ENCODE measurements at regions of chr12 and their contacts with region 1.

Region 1: GRCh38 chr12:109165599-109165998 is 49.2 kb downstream of the ACACB start:
- DNase-seq: no peak
- ATAC-seq: no peak
- H3K4me3 ChIP-seq: no peak overlapping the region
- H3K27ac ChIP-seq: peak overlapping the region in 1 of 12 donors; percentile 80
- H3K4me1 ChIP-seq: peaks cover 4 to 42% (median 26%) of the 10 kb centered on the region in 12 donors
- H3K27me3 ChIP-seq: no peaks in the 10 kb centered on the region
- CTCF ChIP-seq: no peak
- POLR2A ChIP-seq: no peak

Region 2: DNA sequence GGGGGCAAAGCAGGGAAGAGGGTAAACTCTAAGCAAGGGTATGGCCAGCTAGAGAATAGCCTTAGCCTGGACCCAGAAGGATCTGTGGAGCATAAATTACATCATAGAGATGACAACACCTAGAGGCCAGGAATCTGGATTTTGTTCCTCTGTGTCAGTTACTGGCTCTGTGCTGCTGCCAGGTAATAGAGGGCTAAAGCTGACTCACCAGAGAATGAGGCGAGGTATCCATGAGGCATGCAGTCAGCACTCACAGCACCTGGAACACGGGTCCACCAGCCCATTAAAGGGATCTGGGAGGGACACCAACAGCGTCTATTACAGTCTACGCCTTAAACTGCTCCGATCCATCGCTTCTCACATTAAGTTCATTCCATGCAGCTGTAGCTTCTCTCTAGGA is 751.6 kb before region 1 on chr12:
- intact Hi-C with region 1: no loop called
- DNase-seq: no peak
- ATAC-seq: no peak
- H3K4me3 ChIP-seq: no peak overlapping the region
- H3K27ac ChIP-seq: no peak overlapping the region
- H3K4me1 ChIP-seq: no peaks in the 10 kb centered on the region
- H3K27me3 ChIP-seq: peaks cover 0 to 5% (median 0%) of the 10 kb centered on the region in 9 donors
- CTCF ChIP-seq: no peak
- POLR2A ChIP-seq: no peak

Region 3: GRCh38 chr12:109018296-109018695 is 147.3 kb before region 1 on chr12:
- intact Hi-C with region 1: no loop called
- DNase-seq: no peak
- ATAC-seq: no peak
- H3K4me3 ChIP-seq: no peak overlapping the region
- H3K27ac ChIP-seq: no peak overlapping the region
- H3K4me1 ChIP-seq: peaks cover 0 to 7% (median 0%) of the 10 kb centered on the region in 12 donors
- H3K27me3 ChIP-seq: peaks cover 0 to 17% (median 0%) of the 10 kb centered on the region in 9 donors
- CTCF ChIP-seq: no peak
- POLR2A ChIP-seq: no peak

Region 4: GRCh38 chr12:109134186-109134917 is 31.2 kb before region 1 on chr12:
- intact Hi-C with region 1: loop called in 1 of 10 experiments (anchors 5 kb)
- DNase-seq: peak in 2 of 5 donors; percentile 70 to 73
- ATAC-seq: peak in 3 of 4 donors; percentile 10 to 27 (median 16)
- H3K4me3 ChIP-seq: no peak overlapping the region
- H3K27ac ChIP-seq: peak overlapping the region; percentile 3 to 89 (median 46)
- H3K4me1 ChIP-seq: peaks cover 0 to 87% (median 35%) of the 10 kb centered on the region in 12 donors
- H3K27me3 ChIP-seq: no peaks in the 10 kb centered on the region
- CTCF ChIP-seq: peak; percentile 42 to 68 (median 55)
- POLR2A ChIP-seq: no peak

Region 5: DNA sequence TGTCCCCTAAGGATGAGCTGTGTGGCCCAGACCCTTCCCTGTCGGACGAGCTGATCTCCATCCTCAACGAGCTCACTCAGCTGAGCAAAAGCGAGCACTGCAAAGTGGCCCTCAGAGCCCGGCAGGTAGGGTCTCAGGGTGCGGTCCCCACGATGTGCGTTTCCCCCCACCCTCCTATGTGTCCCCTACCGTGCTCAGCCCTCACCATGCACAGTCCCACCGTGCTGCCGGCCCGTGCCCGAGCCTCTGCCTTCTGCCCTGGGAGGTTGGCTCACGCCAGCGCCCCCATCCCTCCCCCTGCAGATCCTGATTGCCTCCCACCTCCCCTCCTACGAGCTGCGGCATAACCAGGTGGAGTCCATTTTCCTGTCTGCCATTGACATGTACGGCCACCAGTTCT is 56.9 kb after region 1 on chr12:
- intact Hi-C with region 1: loop called in 1 of 10 experiments (anchors 5 kb)
- DNase-seq: no peak
- ATAC-seq: peak in 3 of 4 donors; percentile 23 to 27 (median 25)
- H3K4me3 ChIP-seq: no peak overlapping the region
- H3K27ac ChIP-seq: peak overlapping the region in 1 of 12 donors; percentile 48
- H3K4me1 ChIP-seq: peaks cover 0 to 17% (median 0%) of the 10 kb centered on the region in 12 donors
- H3K27me3 ChIP-seq: no peaks in the 10 kb centered on the region
- CTCF ChIP-seq: no peak
- POLR2A ChIP-seq: no peak

Region 6: GRCh38 chr12:109239179-109239578 is 73.6 kb after region 1 on chr12:
- intact Hi-C with region 1: no loop called
- DNase-seq: no peak
- ATAC-seq: no peak
- H3K4me3 ChIP-seq: no peak overlapping the region
- H3K27ac ChIP-seq: no peak overlapping the region
- H3K4me1 ChIP-seq: no peaks in the 10 kb centered on the region
- H3K27me3 ChIP-seq: no peaks in the 10 kb centered on the region
- CTCF ChIP-seq: no peak
- POLR2A ChIP-seq: no peak

Measured in heart left ventricle (tissue), 16 donors.